SK-N-SH (cell line): ENCODE measurements at regions of chr1 and their contacts with region 1.

Region 1: DNA sequence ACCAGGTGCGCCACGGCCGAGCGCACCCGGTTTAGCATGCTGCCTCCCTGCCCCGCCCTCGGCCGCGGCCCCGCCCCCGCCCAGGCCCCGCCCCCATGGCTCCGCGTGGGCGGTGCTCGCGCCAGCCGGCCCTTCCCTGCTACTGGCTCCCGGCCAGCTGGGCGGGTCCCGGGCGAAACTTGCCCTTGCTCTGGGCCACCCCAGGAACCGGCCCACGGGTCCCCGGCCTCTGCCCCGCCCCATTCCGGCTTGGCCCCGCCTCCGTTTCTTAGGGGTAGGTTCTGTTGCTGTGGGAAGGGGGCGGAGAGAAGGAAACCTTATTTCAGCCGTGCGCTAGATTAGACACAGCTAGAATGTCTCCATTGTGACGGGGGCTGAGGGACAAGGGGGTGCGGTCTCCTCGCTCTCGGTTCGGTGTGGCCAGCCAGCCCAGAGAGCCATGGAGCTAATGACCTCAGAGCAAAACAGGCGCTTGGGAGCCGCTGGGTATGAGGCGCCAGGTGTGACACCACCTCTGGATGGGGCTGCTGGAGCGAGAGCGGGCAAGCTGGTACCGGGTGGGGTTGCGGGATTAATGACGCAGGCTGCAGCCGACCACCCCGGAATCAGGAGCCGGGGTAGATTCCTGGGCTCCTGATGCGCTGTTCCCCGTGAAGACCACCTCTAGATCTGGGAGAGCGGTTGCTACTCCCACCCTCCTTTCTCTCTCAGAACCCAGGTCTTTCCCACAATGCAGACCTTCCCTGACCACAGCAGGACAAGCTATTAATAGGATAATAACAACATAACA is at the start of gene PPM1J:
- DNase-seq: peak; percentile 96
- H3K4me3 ChIP-seq: peak within 1 kb of the TSS; percentile 72 to 83
- H3K27ac ChIP-seq: peak within 1 kb of the TSS in 1 of 2 experiments; percentile 29; a peak in 2 of 4 replicates
- H3K4me1 ChIP-seq: peaks cover 0 to 23% of the 10 kb centered on the region in 2 experiments; a peak in 1 of 4 replicates
- H3K27me3 ChIP-seq: no peaks in the 10 kb centered on the region
- CTCF ChIP-seq: no peak
- EP300 ChIP-seq: no peak
- RAD21 ChIP-seq: no peak
- polyA plus RNA-seq, gene PPM1J: 5.3 and 6.7 TPM in 2 replicates

Region 2: DNA sequence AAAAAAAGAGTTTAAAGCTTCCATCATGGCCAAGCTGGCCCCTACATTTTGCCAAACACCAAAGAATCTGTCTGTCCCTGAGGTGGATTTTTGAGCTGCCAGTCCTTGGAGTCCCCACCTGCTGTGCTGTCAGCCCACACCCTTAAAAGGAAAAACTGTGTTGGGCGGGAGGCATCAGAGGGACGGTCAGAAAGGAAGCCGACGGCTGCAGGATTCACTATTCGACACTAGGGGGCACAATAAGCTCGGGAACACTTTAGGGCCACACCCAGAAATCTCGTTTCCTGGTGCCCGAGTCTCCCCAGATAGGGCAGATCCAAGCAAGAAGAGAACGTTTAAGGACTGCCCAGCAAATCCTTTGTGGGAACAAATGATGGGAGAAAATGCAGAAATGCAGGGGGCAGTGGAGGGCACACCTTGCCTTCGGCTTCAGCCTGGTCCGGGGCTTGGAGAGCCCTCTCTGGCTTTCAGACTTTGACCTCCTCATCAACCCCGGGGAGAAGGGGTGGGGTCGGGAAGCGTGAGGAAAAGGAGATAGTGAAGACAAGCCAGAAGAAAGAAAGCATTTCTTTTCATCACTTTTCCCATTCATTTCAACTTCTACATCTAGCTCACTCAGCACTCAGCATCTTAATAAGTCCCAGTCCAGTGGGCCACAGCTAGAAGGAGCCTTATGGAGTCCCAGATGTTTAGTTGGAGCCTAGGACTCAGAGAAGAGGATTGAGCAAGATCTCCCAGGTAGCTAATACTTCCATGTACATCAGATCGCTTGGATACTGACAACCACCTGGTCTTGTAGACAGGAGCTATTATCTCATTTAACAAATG is 324.5 kb before region 1 on chr1:
- CTCF ChIA-PET with region 1: interaction called, 11 read pairs
- POLR2A ChIA-PET with region 1: no interaction called
- DNase-seq: peak; percentile 84
- H3K4me3 ChIP-seq: peak overlapping the region; percentile 43 to 65
- H3K27ac ChIP-seq: peak overlapping the region; percentile 31 to 73; a peak in 3 of 4 replicates
- H3K4me1 ChIP-seq: peaks cover 10 to 17% of the 10 kb centered on the region in 2 experiments
- H3K27me3 ChIP-seq: no peaks in the 10 kb centered on the region
- CTCF ChIP-seq: peak; percentile 97
- EP300 ChIP-seq: no peak
- RAD21 ChIP-seq: peak; percentile 96

Region 3: GRCh38 chr1:112700290-112701226 is 14.9 kb before region 1 on chr1:
- CTCF ChIA-PET with region 1: interaction called, 11 read pairs
- POLR2A ChIA-PET with region 1: interaction called, 3 read pairs
- DNase-seq: peak; percentile 87
- H3K4me3 ChIP-seq: 0 out of 4 replicates have a peak overlapping the region, but pooled peaks of 1 of the 2 experiments have one; percentile 18
- H3K27ac ChIP-seq: peak overlapping the region; percentile 70 to 90
- H3K4me1 ChIP-seq: peaks cover 36 to 54% of the 10 kb centered on the region in 2 experiments; a peak in 3 of 4 replicates
- H3K27me3 ChIP-seq: no peaks in the 10 kb centered on the region
- CTCF ChIP-seq: peak; percentile 16; the same call in 1 of the 2 replicates
- EP300 ChIP-seq: peak in 1 of 2 experiments; percentile 42; a peak in 1 of 4 replicates
- RAD21 ChIP-seq: no peak

Region 4: DNA sequence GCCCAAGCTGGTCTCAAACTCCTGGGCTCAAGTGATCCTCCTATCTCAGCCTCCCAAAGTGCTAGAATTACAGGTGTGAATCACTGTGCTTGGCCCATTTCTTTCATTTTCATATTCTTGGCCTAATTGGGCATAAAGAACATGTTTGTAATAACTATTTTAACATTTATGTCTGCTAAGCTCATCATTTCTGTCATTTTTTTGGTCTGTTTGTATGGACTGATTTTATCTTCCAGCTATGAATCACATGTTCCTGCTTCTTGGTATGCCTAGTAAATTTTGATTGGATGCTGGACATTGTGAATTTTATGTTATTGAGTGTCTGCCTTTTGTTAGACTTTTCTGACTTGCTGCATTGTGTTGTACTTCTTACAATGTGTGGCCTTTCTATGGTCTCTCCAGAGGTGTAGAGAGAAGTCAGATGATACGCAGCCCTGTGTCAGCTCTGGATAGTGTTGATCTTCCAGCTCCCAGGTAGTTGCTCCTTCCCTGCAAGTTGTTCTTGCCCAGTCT is 38.7 kb after region 1 on chr1:
- CTCF ChIA-PET with region 1: interaction called, 23 read pairs
- POLR2A ChIA-PET with region 1: no interaction called
- DNase-seq: no peak
- H3K4me3 ChIP-seq: no peak overlapping the region
- H3K27ac ChIP-seq: no peak overlapping the region
- H3K4me1 ChIP-seq: peaks cover 0 to 3% of the 10 kb centered on the region in 2 experiments; a peak in 1 of 4 replicates
- H3K27me3 ChIP-seq: no peaks in the 10 kb centered on the region; the same call in 1 of the 2 replicates
- CTCF ChIP-seq: no peak
- EP300 ChIP-seq: no peak
- RAD21 ChIP-seq: no peak

Region 5: GRCh38 chr1:112803906-112804762 is 88.7 kb after region 1 on chr1:
- CTCF ChIA-PET with region 1: interaction called, 754 read pairs
- POLR2A ChIA-PET with region 1: no interaction called
- DNase-seq: peak; percentile 79
- H3K4me3 ChIP-seq: no peak overlapping the region; a peak in 1 of 4 replicates
- H3K27ac ChIP-seq: no peak overlapping the region
- H3K4me1 ChIP-seq: no peaks in the 10 kb centered on the region
- H3K27me3 ChIP-seq: no peaks in the 10 kb centered on the region
- CTCF ChIP-seq: peak; percentile 86
- EP300 ChIP-seq: no peak
- RAD21 ChIP-seq: peak; percentile 99

Region 6: DNA sequence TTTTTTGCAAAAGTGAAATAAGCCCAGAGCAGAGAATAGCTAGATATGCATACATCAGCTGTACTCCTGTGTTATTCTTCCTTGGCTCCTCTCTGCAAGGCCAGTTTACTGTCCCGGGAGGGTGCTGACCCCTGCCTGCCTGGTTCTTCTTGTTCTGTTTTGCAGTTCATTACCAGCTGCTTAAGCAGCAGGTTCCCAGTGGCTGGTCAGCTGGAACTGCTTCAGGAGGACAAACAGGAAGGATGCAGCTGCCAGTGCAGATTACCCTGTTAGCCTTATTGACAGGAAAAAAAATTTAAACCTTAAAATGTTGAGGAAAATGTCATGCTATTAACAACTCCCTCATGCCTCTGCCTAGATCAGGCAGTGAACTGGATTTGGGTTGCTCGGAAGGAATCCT is 341.5 kb after region 1 on chr1:
- CTCF ChIA-PET with region 1: interaction called, 16 read pairs
- POLR2A ChIA-PET with region 1: no interaction called
- DNase-seq: peak; percentile 47
- H3K4me3 ChIP-seq: no peak overlapping the region
- H3K27ac ChIP-seq: peak overlapping the region in 1 of 2 experiments; percentile 19; a peak in 1 of 4 replicates
- H3K4me1 ChIP-seq: peaks cover 0 to 22% of the 10 kb centered on the region in 2 experiments; a peak in 1 of 4 replicates
- H3K27me3 ChIP-seq: no peaks in the 10 kb centered on the region
- CTCF ChIP-seq: no peak
- EP300 ChIP-seq: no peak
- RAD21 ChIP-seq: no peak